ENCODE measurements at regions of chr13 and their contacts with region 1.

Region 1: GRCh38 chr13:35978603-35979316 is 152.4 kb downstream of the DCLK1 start:
- DNase-seq: no peak
- ATAC-seq: peak; percentile 57 to 83 (median 76)
- H3K4me3 ChIP-seq: no peak overlapping the region
- H3K27ac ChIP-seq: no peak overlapping the region
- H3K4me1 ChIP-seq: no peaks in the 10 kb centered on the region
- H3K27me3 ChIP-seq: no peaks in the 10 kb centered on the region
- CTCF ChIP-seq: peak; percentile 74 to 81 (median 76)
- POLR2A ChIP-seq: no peak

Region 2: GRCh38 chr13:36275190-36276002 is 296.6 kb after region 1 on chr13:
- intact Hi-C with region 1: loop called in 1 of 2 experiments (anchors 10 kb)
- DNase-seq: no peak
- ATAC-seq: peak; percentile 35 to 66 (median 56)
- H3K4me3 ChIP-seq: no peak overlapping the region
- H3K27ac ChIP-seq: no peak overlapping the region
- H3K4me1 ChIP-seq: no peaks in the 10 kb centered on the region
- H3K27me3 ChIP-seq: no peaks in the 10 kb centered on the region
- CTCF ChIP-seq: peak; percentile 52 to 54 (median 54)
- POLR2A ChIP-seq: no peak